ENCODE measurements at regions of chr16 and their contacts with region 1.

Region 1: DNA sequence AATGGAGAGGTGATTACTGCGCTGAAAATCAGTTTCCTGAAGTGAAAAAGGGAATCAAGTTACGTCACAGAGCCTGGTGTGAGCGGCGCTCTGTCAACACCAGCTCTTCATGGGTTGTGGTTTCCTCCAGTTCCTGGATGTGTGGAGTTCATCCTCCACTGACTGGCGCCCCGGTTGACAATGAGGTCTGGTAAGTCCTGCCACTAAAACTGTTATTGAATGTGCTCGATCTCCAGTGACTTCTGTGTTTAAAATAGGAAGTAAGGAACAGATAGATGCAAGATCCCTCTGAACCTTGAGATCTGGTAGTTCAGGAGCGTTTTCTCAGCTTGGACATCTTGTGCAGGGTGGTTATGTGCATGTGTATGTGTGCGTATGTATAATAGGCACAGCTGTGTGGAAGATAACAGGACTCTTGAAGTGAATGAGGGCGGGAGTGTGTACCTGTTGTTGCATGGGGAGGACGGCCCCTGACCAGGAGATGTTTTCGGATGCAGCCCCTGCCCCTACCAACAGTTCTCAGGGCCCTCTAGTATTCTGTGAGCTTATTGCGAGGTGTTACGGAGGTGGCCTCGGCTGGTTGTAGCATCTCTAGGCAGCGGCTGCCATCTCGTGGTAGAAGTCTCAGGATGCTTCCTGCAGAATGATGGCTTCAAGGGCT is 22.0 kb upstream of the GOT2 start:
- DNase-seq: peak; percentile 88
- ATAC-seq: peak; percentile 99
- H3K4me3 Mint-ChIP-seq: peak overlapping the region; percentile 47
- H3K27ac Mint-ChIP-seq: peak overlapping the region; percentile 59
- H3K4me1 Mint-ChIP-seq: peaks cover 11% of the 10 kb centered on the region
- H3K27me3 Mint-ChIP-seq: peaks cover 2% of the 10 kb centered on the region

Region 2: DNA sequence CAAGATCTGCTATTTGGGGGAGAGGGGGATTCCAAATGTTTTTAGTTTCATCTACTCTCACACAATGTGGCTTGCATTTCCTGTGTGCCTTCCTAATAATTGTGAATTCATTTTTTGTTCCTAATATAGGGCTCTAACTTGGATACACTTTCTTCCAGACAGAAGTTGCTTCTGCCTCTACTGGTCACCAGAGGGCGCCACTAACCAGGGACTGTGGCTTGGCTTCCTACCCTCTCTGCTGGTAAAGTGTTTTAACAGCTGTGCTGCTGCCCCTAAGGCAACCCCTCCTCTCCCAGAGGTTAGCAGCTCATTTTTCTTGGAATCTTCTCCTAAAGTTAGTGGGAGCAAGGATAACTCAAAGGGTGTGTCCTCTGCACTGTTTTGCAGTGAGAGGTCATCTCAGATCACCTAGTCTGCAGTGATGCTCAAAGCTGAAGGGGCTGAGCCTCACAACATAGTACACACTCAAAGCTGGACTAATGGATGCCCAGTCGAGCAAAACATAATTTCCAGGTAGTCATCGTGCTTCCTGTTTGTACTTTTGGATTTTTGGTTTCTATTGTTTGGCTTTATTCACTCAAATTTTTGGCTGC is 456.3 kb before region 1 on chr16:
- CTCF ChIA-PET with region 1: interaction called, 11 read pairs
- POLR2A ChIA-PET with region 1: no interaction called
- DNase-seq: peak; percentile 49
- ATAC-seq: no peak
- H3K4me3 Mint-ChIP-seq: no peak overlapping the region
- H3K27ac Mint-ChIP-seq: no peak overlapping the region
- H3K4me1 Mint-ChIP-seq: no peaks in the 10 kb centered on the region
- H3K27me3 Mint-ChIP-seq: peaks cover 10% of the 10 kb centered on the region

Region 3: GRCh38 chr16:58494981-58495520 is 261.1 kb before region 1 on chr16:
- CTCF ChIA-PET with region 1: interaction called, 11 read pairs
- POLR2A ChIA-PET with region 1: no interaction called
- DNase-seq: peak; percentile 79
- ATAC-seq: peak; percentile 72
- H3K4me3 Mint-ChIP-seq: no peak overlapping the region
- H3K27ac Mint-ChIP-seq: no peak overlapping the region
- H3K4me1 Mint-ChIP-seq: peaks cover 9% of the 10 kb centered on the region
- H3K27me3 Mint-ChIP-seq: peaks cover 8% of the 10 kb centered on the region

Region 4: GRCh38 chr16:58678716-58679115 is 77.4 kb before region 1 on chr16:
- CTCF ChIA-PET with region 1: interaction called, 16 read pairs
- POLR2A ChIA-PET with region 1: no interaction called
- DNase-seq: no peak
- ATAC-seq: no peak
- H3K4me3 Mint-ChIP-seq: no peak overlapping the region
- H3K27ac Mint-ChIP-seq: no peak overlapping the region
- H3K4me1 Mint-ChIP-seq: peaks cover 9% of the 10 kb centered on the region
- H3K27me3 Mint-ChIP-seq: no peaks in the 10 kb centered on the region

Region 5: GRCh38 chr16:58723109-58723508 is 33.0 kb before region 1 on chr16:
- CTCF ChIA-PET with region 1: interaction called, 20 read pairs
- POLR2A ChIA-PET with region 1: no interaction called
- DNase-seq: no peak
- ATAC-seq: no peak
- H3K4me3 Mint-ChIP-seq: no peak overlapping the region
- H3K27ac Mint-ChIP-seq: no peak overlapping the region
- H3K4me1 Mint-ChIP-seq: no peaks in the 10 kb centered on the region
- H3K27me3 Mint-ChIP-seq: no peaks in the 10 kb centered on the region

Region 6: DNA sequence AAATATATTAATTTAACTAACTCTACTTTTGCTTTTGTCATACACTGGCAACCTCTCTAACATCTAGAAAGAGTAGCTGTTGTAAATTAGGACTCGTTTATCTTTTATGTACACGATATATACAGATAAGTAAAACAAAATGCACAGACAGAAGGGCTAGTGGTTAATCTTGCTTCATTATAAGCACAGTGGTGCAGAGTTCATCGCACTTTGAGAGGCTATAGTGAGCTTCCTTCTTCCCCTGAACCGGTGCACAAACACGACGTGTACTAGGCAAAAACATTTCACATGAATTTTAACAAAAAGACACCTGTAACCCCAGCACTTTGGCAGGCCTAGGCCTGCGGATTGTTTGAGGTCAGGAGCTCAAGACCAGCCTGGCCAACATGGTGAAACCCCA is 11.6 kb before region 1 on chr16:
- CTCF ChIA-PET with region 1: interaction called, 13 read pairs
- POLR2A ChIA-PET with region 1: no interaction called
- DNase-seq: no peak
- ATAC-seq: no peak
- H3K4me3 Mint-ChIP-seq: no peak overlapping the region
- H3K27ac Mint-ChIP-seq: no peak overlapping the region
- H3K4me1 Mint-ChIP-seq: no peaks in the 10 kb centered on the region
- H3K27me3 Mint-ChIP-seq: no peaks in the 10 kb centered on the region

Region 7: GRCh38 chr16:58832386-58832895 is 76.3 kb after region 1 on chr16:
- CTCF ChIA-PET with region 1: no interaction called
- POLR2A ChIA-PET with region 1: no interaction called
- DNase-seq: no peak
- ATAC-seq: no peak
- H3K4me3 Mint-ChIP-seq: no peak overlapping the region
- H3K27ac Mint-ChIP-seq: no peak overlapping the region
- H3K4me1 Mint-ChIP-seq: no peaks in the 10 kb centered on the region
- H3K27me3 Mint-ChIP-seq: peaks cover 5% of the 10 kb centered on the region